ENCODE measurements at regions of chr6 and their contacts with region 1.

Region 1: DNA sequence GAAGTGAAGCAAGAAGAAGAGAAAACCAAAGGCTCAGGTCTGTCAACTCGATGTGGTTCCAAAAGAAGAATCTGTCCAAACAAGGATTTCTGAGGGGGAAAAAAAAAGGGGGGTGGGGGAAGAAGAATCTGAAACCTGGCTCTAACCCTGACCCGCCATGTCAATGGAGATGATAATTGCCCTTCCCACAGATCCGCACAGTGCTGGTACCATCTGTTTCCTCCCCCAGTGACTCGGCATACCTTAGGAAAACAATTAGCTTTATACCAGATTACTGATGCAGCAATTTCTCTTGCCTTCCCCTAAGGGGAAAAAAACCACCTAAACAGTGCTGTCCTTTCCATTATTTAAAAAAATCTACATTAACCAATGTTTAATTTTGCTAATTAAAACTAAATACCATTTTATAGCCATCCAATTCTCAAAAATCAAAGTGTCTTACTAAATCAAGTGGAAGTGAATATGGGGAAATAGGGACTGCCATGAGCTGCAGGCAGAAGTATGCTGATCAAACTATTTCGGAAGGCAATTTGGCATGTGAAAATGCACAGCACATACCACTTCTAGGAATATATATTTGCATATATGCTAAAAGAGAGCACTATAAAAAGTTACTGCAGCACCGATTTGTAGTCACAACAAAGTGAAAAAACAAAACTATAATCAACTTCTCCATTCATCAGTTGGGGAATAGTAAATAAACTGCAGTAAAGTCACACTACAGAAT is 46.8 kb downstream of the MAP7 start:
- H3K4me3 ChIP-seq: no peak overlapping the region
- H3K27ac ChIP-seq: no peak overlapping the region
- H3K4me1 ChIP-seq: peaks cover 16% of the 10 kb centered on the region
- CTCF ChIP-seq: no peak

Region 2: DNA sequence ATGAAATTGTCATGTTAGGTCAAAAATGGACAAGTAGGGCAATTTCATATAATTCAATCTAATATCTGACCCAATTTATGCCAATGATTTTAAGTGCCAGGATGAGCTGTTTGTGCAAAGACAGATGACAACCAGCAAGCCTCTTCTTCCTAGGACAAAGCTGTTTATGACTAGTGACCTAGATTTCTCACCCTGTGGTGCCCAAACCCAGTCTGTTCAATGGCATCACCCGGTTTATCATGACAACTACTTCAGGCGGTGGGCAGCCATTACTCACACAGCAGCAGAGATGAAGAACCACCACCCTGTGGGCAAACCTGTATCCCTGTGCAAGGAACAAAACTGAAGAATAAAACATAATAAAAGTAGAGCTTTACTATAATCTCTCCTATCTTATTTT is 12.2 kb before region 1 on chr6:
- CTCF ChIA-PET with region 1: no interaction called
- POLR2A ChIA-PET with region 1: no interaction called
- H3K4me3 ChIP-seq: no peak overlapping the region
- H3K27ac ChIP-seq: no peak overlapping the region
- H3K4me1 ChIP-seq: 0 out of 2 replicates have a peak, but pooled peaks cover 4% of the 10 kb centered on the region
- CTCF ChIP-seq: no peak

Region 3: DNA sequence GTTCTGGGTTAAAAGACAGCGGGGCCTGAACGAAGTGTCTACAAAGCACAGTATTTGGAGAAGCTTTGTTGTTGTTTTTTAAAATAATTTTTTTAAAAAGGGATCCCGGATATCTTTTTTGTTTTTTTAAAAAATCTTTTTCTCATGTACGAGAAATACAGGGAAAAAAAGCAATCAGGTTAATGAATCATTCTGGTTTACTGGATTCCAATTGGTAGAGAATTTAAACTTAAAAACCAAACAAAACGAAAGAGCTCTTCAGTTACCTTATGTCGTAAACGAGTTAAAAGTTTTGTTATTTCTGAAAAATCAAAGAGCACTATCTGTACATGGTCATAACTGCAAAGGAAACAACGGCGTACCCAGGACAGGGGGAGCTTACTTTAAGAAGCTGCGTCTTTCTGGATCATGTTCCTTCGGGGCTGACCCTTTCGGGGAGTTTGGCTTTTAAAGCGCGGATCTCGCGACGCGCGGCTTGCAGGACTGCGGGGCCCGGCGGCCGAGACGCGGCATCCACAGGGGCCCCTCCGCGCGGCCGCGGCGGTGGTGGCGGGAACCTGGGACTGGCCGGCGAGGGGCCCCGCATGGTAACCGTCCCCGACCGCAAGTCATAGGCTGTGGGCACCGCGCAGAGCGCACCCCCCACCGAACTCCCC is 540.4 kb after region 1 on chr6:
- CTCF ChIA-PET with region 1: no interaction called
- POLR2A ChIA-PET with region 1: interaction called, 11 read pairs
- H3K4me3 ChIP-seq: peak overlapping the region; percentile 57
- H3K27ac ChIP-seq: peak overlapping the region; percentile 83; the same call in 1 of the 2 replicates
- H3K4me1 ChIP-seq: peaks cover 10% of the 10 kb centered on the region; the same call in 1 of the 2 replicates
- CTCF ChIP-seq: no peak

Measured in HEK293 (cell line).